ENCODE measurements at regions of chr9 and their contacts with region 1.

Region 1: DNA sequence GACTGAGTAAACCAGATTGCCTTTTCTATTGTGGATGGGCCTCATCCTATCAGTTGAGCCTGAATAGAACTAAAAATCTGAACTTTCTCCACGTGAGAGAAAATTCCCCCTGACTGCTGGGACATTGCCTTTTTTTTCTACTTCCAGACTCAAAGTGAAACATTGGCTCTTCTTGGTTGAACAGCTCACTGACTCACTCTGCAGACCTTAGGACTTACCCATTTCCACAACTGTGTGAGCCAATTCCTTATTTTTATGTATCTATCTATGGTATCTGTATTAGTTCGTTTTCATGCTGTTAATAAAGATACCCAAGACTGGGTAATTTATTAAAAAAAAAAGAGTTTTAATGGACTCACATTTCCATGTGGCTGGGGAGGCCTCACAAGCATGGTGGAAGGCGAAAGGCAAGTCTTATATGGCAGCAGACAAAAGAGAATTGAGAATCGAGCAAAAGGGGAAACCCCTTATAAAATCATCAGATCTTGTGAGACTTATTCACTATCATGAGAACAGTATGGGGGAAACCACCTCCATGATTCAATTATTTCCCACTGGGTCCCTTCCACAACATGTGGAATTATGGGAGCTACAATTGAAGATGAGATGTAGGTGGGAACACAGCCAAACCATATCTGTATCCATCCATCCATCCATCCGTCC is 306.7 kb upstream of the SLC24A2 start:
- DNase-seq: no peak
- H3K4me3 ChIP-seq: no peak overlapping the region
- H3K27ac ChIP-seq: no peak overlapping the region
- H3K4me1 ChIP-seq: no peaks in the 10 kb centered on the region
- H3K27me3 ChIP-seq: no peaks in the 10 kb centered on the region
- CTCF ChIP-seq: no peak

Region 2: DNA sequence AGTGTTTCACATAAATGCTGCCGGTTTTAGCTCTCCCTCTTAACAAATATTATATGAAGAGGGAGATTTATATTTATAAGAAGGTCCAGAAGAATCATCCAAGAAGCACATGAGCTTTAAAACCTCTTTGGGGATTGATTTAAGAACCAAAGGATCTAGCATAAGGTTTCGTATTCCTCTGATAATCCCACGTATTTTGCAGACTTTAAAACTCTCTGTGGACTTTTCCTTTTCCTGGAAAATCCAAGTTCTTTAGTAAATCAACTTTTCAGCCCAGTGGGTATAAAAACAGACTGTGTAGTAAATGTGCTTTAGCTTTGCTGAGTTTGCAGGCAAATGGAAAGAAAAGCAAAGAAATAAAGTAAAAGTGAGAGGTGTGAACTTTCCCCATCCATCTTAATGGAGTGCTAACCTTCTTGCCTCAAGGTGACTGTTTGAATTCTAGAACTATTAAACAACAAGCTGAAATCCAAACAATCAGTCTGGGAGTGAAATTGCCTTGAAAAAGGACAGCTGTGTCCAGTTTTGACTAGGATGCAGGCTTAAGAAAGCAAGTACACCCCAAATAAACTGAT is 56.7 kb after region 1 on chr9:
- intact Hi-C with region 1: loop called (anchors 10 kb)
- DNase-seq: no peak
- H3K4me3 ChIP-seq: no peak overlapping the region
- H3K27ac ChIP-seq: no peak overlapping the region
- H3K4me1 ChIP-seq: no peaks in the 10 kb centered on the region
- H3K27me3 ChIP-seq: no peaks in the 10 kb centered on the region
- CTCF ChIP-seq: no peak